ENCODE measurements at regions of chr16 and their contacts with region 1.

Region 1: DNA sequence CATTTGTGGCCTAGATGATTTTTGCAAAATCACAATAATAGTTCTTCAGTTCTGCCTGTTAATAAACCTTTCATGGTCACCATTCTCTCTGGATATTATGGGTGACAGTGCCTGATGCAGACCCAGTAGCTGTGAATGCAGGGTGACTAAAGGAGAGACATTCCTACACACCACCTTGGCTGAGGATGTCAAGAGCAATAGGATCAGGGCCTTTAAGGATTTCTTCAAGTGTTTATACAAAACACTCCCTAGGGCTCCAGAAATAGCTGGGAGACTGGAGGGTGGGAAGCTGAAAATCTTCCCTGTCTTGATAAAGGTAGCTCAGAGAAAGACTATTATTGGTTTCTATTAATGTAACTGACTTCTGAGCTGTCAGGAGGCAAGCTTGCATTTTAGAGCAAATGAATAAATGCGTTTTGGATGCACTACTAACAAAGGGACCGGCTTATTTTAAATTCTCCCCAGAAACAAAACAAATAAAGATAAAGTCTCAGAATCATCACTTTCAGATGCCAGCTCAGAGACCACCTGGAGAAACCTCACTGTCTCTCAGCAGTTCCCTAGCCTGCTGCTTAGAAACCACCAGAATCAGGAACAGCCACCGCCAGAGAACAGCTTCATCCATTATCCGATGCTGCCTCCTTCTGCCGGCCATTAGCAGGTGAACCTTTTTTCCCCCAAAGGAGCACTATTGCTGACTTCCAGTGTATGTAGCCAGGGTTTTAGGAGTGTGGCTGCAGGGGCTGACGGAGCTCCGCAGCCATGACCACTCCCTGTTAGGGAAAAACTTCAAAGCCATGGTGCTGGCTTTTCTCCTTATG is 171.4 kb upstream of the DYNLRB2 start:
- DNase-seq: peak; percentile 10
- H3K4me3 ChIP-seq: no peak overlapping the region
- CTCF ChIP-seq: peak; percentile 81

Region 2: GRCh38 chr16:79997257-79997656 is 372.1 kb before region 1 on chr16:
- CTCF ChIA-PET with region 1: interaction called, 70 read pairs
- POLR2A ChIA-PET with region 1: no interaction called
- DNase-seq: no peak
- H3K4me3 ChIP-seq: no peak overlapping the region
- CTCF ChIP-seq: peak; percentile 47

Region 3: GRCh38 chr16:80084685-80085084 is 284.7 kb before region 1 on chr16:
- CTCF ChIA-PET with region 1: interaction called, 10 read pairs
- POLR2A ChIA-PET with region 1: no interaction called
- DNase-seq: no peak
- H3K4me3 ChIP-seq: no peak overlapping the region
- CTCF ChIP-seq: peak; percentile 40